ENCODE measurements at regions of chr2 and their contacts with region 1.

Region 1: DNA sequence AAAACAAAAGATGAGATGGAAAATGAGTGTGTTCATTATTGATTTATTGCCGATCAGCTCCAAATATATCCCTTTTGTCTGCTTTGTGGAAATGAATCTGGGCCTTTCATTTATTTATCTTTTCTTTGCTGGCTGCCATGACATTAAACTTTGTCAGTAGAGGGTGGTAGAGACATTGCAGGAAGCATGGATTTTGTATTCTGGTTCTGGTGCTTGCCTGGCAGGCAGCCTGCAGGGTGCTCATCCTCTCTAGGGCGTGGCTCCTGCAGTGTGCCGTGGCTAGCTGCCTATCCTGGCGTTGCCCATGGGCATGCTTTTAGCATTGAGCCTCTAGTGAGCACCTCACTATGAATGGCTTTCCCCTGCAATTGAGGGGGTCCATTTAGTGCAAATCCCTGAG is 593.1 kb downstream of the RNF144A start:
- DNase-seq: no peak
- ATAC-seq: peak; percentile 61
- H3K4me3 ChIP-seq: no peak overlapping the region
- H3K27ac ChIP-seq: no peak overlapping the region
- H3K4me1 ChIP-seq: peaks cover 4% of the 10 kb centered on the region; the same call in 1 of the 2 replicates
- H3K27me3 ChIP-seq: no peaks in the 10 kb centered on the region
- CTCF ChIP-seq: peak; percentile 4 to 19 (median 17); a peak in 1 of 6 replicates
- EP300 ChIP-seq: no peak
- POLR2A ChIP-seq: no peak
- RAD21 ChIP-seq: 0 out of 2 replicates have a peak, but pooled peaks have one; percentile 13

Region 2: GRCh38 chr2:7497178-7497577 is 13.2 kb before region 1 on chr2:
- CTCF ChIA-PET with region 1: interaction called, 8 read pairs
- POLR2A ChIA-PET with region 1: no interaction called
- RAD21 ChIA-PET with region 1: interaction called, 5 read pairs
- SMC1A ChIA-PET with region 1: interaction called, 43 read pairs
- in situ Hi-C with region 1: no loop called
- intact Hi-C with region 1: no loop called
- DNase-seq: no peak
- ATAC-seq: peak; percentile 89
- H3K4me3 ChIP-seq: no peak overlapping the region
- H3K27ac ChIP-seq: no peak overlapping the region
- H3K4me1 ChIP-seq: no peaks in the 10 kb centered on the region
- H3K27me3 ChIP-seq: no peaks in the 10 kb centered on the region
- CTCF ChIP-seq: no peak
- EP300 ChIP-seq: no peak
- POLR2A ChIP-seq: no peak
- RAD21 ChIP-seq: no peak